Naive thymus-derived CD8-positive, alpha-beta T cell (primary cell): ENCODE measurements at regions of chr16 and their contacts with region 1.

Region 1: GRCh38 chr16:75519881-75520280 is 16.0 kb downstream of the CHST5 start:
- DNase-seq: no peak
- ATAC-seq: no peak
- H3K4me3 Mint-ChIP-seq: no peak overlapping the region
- H3K27ac Mint-ChIP-seq: no peak overlapping the region
- H3K4me1 Mint-ChIP-seq: peaks cover 8 to 14% (median 12%) of the 10 kb centered on the region in 4 donors
- H3K27me3 Mint-ChIP-seq: no peaks in the 10 kb centered on the region

Region 2: GRCh38 chr16:75432828-75433731 is 86.8 kb before region 1 on chr16 and contains the start of gene CFDP1:
- POLR2A ChIA-PET with region 1: interaction called, 13 read pairs
- DNase-seq: peak; percentile 90 to 98 (median 96)
- ATAC-seq: peak; percentile 85 to 86
- H3K4me3 Mint-ChIP-seq: peak within 1 kb of the TSS; percentile 90 to 97 (median 94)
- H3K27ac Mint-ChIP-seq: peak within 1 kb of the TSS; percentile 94 to 99 (median 96)
- H3K4me1 Mint-ChIP-seq: peaks cover 20 to 53% (median 44%) of the 10 kb centered on the region in 4 donors
- H3K27me3 Mint-ChIP-seq: no peaks in the 10 kb centered on the region
- polyA plus RNA-seq, gene CFDP1: 34.3 to 36.8 (median 34.5) TPM

Region 3: DNA sequence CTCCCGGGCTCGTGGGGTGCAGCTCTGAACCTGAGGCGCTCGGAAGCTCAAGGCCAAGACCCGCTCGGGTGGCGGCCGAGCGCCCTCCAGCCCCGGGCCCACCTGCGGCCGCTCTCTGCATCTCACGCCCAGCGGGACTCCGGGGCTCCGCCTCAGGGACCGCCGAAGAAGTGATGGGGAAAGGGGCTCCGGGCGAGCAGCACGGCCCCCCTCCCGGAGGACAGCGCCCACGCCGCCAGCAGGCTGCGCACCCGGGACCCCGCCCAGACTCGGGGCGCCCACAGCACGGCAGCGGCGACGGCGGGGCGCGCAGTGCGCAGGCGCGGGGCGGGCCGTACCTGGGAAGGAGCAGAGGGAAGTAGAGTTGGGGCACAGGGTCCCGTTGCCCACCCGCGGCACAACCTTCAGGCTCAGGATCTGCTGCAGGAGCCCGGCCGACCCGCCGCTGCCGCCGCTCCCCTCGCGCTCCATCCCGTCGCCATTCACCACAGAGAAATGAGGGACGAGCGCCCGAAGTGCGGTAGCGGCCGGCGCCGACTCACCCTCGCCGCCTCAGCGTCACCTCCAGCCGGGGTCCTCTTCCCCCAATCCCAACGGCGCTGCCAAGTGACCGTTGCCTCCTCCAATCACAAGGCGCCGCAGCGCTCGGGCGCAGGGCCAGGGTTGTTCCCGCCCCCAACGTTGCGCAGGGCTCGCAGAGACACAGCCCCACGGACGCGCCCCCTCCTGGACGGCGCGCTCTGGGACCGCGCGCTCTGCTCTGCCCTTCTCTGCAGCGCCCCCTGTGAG is 55.6 kb before region 1 on chr16 and contains the start of gene TMEM170A:
- POLR2A ChIA-PET with region 1: interaction called, 17 read pairs
- DNase-seq: peak; percentile 96 to 99 (median 99)
- ATAC-seq: peak; percentile 89 to 91
- H3K4me3 Mint-ChIP-seq: peak within 1 kb of the TSS; percentile 88 to 97 (median 94)
- H3K27ac Mint-ChIP-seq: peak within 1 kb of the TSS; percentile 81 to 98 (median 96)
- H3K4me1 Mint-ChIP-seq: peaks cover 25 to 51% (median 48%) of the 10 kb centered on the region in 4 donors
- H3K27me3 Mint-ChIP-seq: no peaks in the 10 kb centered on the region
- polyA plus RNA-seq, gene TMEM170A: 32.8 to 45.1 (median 33.8) TPM

Region 4: DNA sequence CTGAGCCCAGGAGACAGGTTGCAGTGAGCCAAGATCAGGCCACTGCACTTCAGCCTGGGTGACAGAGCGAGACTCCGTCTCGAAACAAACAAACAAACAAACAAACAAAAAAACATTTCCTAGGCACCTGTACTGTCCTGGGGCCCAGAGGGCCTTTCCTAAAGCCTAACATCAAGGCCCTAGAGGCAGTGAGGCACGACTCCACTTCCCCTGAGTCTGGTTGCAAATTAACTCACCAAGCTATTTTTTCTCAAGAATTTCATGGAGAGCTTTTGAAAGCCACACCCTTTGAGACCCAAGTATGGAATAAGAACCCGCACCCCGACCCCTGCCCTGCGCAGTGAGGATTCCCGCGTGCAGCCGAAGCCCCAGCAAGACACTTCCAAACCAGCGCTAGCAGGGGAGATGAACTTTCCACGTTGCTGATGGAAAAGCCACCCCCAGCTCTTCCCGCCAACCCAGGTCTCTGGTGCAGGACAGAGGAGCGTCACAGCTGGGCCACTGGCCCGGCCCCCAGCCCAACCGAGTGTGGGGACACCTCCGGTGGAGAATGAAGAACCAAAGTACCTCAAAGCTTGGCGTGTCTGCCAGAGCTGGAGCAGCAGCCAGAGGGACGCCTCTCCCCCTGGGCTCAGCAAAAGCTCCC is 14.8 kb after region 1 on chr16:
- POLR2A ChIA-PET with region 1: no interaction called
- DNase-seq: no peak
- ATAC-seq: no peak
- H3K4me3 Mint-ChIP-seq: no peak overlapping the region
- H3K27ac Mint-ChIP-seq: no peak overlapping the region
- H3K4me1 Mint-ChIP-seq: no peaks in the 10 kb centered on the region
- H3K27me3 Mint-ChIP-seq: peaks cover 0 to 4% (median 2%) of the 10 kb centered on the region in 5 donors

Region 5: GRCh38 chr16:75566040-75566810 is 46.3 kb after region 1 on chr16 and contains the start of gene GABARAPL2:
- POLR2A ChIA-PET with region 1: interaction called, 13 read pairs
- DNase-seq: peak; percentile 84 to 98 (median 94)
- ATAC-seq: peak; percentile 79
- H3K4me3 Mint-ChIP-seq: peak within 1 kb of the TSS; percentile 91 to 99 (median 98)
- H3K27ac Mint-ChIP-seq: peak within 1 kb of the TSS; percentile 92 to 99 (median 97)
- H3K4me1 Mint-ChIP-seq: peaks cover 8 to 52% (median 45%) of the 10 kb centered on the region in 4 donors
- H3K27me3 Mint-ChIP-seq: peaks cover 3 to 19% (median 9%) of the 10 kb centered on the region in 5 donors
- polyA plus RNA-seq, gene GABARAPL2: 226 to 291 (median 250) TPM

Region 6: DNA sequence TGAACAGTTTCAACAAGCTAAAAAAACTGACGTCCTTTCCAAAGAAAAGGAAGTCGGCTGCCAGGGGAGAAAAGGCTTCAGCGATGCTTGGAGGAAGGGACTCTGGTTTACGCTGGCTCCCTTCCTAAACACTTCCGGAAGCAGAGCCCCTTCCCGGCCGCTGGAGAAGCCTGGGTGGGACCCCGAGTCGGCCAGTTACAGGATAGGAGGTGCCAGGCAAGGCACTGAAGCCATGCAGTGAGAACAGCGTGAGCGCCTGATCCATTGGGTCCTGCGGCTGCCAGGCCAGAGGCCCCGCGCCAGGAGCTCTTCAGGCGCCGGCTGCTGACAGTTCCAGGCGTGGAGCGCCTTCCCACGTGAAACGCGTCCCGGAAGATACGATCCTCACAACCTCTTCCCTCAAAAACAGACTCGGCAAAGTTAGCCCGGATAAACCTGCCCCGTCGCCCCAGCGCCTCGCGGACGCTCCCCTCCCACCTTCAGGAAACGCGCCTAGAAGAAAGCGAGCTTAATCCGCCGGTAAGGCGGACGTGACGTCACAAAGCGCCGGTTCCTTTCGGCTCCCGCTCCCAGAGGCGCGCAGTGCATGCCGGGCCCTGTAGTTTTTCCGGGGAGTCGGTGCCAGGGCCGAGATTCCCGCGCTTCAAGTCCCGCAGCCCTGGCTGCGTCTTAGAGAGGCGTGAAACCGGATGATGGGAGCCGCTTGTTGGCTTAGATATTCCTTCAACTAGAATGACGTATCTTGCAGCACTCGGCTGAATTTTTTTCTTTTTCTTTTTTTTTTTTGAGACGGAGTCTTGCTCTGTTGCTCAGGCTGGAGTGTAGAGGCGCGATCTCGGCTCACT is 103.1 kb after region 1 on chr16 and contains the start of gene ADAT1:
- POLR2A ChIA-PET with region 1: interaction called, 22 read pairs
- DNase-seq: peak; percentile 91 to 99 (median 98)
- ATAC-seq: peak; percentile 92 to 95
- H3K4me3 Mint-ChIP-seq: peak within 1 kb of the TSS; percentile 93 to 99 (median 96)
- H3K27ac Mint-ChIP-seq: peak within 1 kb of the TSS; percentile 91 to 99 (median 98)
- H3K4me1 Mint-ChIP-seq: peaks cover 30 to 60% (median 52%) of the 10 kb centered on the region in 4 donors
- H3K27me3 Mint-ChIP-seq: no peaks in the 10 kb centered on the region
- polyA plus RNA-seq, gene ADAT1: 35.0 to 41.5 (median 39.8) TPM